BJ (cell line): ENCODE measurements at regions of chr6 and their contacts with region 1.

Region 1: DNA sequence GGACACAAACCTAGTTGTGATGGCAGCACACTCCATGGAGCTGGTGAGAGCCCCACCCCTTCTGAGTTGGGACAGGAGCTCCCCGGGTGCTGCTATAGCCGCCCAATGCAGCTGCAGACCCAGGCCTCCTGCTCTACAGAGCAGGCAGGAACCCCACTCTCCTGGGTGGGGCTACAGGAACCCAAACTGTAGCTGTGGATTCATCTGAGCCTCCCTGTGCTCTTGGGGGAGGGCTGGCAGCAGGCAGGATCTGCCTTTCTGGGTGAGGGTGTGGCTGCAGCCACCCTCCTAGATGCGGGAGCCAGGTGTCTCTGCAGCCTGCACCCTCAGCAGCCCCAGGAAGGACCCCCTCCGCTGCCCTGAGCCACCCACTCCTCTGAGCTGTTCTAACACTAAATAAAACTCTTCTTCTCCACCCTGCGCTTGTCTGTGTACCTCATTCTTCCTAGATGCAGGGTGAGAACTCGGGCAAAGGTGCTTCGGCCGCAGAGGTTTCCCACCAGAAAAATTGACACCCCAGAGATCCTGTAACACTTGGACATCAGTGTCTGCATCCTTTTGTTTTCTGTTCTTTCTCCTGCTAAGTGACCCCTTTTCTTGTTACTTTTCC is 55.2 kb upstream of the KIF13A start:
- DNase-seq: no peak
- H3K4me3 ChIP-seq: no peak overlapping the region
- H3K27me3 ChIP-seq: no peaks in the 10 kb centered on the region
- CTCF ChIP-seq: no peak

Region 2: DNA sequence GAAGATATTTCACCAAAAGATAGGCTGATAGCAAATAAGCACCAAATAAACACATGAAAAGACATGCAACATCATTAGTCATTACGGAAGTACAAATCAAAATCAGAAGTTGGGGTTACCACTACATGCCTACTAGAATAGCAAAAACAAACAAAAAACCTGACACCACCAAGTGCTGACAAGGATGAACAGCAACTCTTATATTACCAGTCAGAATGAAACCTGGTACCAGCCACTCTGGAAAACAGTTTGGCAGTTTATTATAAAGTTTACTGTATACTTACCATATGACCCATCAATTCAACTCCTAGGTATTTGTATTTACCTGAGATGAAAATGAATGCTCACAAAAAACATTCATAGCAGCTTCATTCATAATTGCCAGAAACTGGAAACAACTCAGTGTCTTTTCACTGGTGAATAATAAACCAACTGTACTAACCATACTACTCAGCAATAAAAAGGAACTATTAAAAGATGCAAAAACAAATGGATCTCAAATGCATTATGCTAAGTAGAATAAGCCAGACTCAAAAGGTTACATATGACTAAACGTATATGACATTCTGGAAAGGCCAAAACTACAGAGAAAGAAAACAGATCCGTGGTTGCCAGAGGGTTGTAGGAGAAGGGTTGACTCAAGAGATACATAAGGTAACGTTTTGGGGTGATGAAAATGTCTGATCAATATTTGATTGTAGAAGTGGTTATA is 368.9 kb before region 1 on chr6:
- CTCF ChIA-PET with region 1: no interaction called
- POLR2A ChIA-PET with region 1: interaction called, 16 read pairs
- DNase-seq: no peak
- H3K4me3 ChIP-seq: no peak overlapping the region
- H3K27me3 ChIP-seq: no peaks in the 10 kb centered on the region
- CTCF ChIP-seq: no peak

Region 3: GRCh38 chr6:17945111-17945510 is 97.5 kb before region 1 on chr6:
- CTCF ChIA-PET with region 1: no interaction called
- POLR2A ChIA-PET with region 1: no interaction called
- DNase-seq: no peak
- H3K4me3 ChIP-seq: no peak overlapping the region
- H3K27me3 ChIP-seq: no peaks in the 10 kb centered on the region
- CTCF ChIP-seq: no peak

Region 4: DNA sequence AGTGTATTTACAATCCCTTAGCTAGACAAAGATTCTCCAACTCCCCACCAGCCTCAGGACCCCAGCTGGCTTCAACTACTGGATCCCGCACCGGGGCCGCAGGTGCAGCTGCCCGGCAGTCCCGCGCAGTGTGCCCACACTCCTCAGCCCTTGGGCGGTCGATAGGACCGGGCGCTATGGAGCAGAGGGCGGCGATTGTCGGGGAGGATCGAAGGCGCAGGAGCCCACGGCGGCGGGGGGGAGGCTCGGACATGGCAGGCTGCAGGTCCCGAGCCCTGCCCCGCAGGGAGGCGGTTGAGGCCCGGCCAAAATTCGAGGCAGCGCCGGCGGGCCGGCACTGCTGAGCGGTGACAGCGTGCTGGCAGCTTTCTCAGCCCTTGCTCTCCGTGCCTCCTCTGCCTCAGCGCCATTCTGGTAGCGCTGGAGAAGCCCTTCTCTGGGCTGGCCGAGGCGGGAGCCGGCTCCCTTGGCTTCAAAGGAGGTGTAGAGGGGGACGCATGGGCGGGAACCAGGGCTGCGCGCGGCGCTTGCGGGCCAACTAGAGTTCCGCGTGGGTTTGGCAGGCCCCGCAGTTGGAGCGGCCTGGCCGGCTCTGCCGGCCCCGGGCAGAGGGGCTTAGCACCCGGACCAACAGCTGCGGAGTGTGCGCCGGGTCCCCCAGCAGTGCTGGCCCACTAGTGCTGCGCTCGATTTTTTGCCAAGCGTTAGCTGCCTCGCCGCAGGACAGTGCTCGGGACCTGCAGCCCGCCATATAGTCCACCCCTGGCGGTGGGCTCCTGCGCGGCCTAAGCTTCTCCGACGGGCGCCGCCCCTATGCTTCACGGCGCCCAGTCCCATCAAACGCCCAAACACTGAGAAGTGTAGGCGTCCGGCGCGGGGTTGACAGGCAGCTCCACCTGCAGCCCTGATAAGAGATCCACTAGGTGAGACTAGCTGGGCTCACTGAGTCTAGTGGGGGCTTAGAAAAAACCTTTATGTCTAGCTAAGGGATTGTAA is 22.8 kb before region 1 on chr6:
- CTCF ChIA-PET with region 1: no interaction called
- POLR2A ChIA-PET with region 1: interaction called, 10 read pairs
- DNase-seq: no peak
- H3K4me3 ChIP-seq: no peak overlapping the region
- H3K27me3 ChIP-seq: no peaks in the 10 kb centered on the region
- CTCF ChIP-seq: no peak